ENCODE measurements at regions of chr4 and their contacts with region 1.

Region 1: GRCh38 chr4:4541661-4542570 is at the start of gene STX18:
- DNase-seq: peak; percentile 81 to 95 (median 88)
- ATAC-seq: peak; percentile 95
- H3K4me3 ChIP-seq: peak within 1 kb of the TSS; percentile 91 to 93
- H3K4me3 Mint-ChIP-seq: peak within 1 kb of the TSS; percentile 95
- H3K27ac ChIP-seq: peak within 1 kb of the TSS; percentile 68 to 86
- H3K27ac Mint-ChIP-seq: peak within 1 kb of the TSS; percentile 95
- H3K4me1 ChIP-seq: peaks cover 28% of the 10 kb centered on the region
- H3K4me1 Mint-ChIP-seq: peaks cover 63% of the 10 kb centered on the region
- H3K27me3 ChIP-seq: no peaks in the 10 kb centered on the region
- H3K27me3 Mint-ChIP-seq: no peaks in the 10 kb centered on the region
- CTCF ChIP-seq: no peak
- total RNA-seq, gene STX18: 12.6 to 15.6 TPM

Region 2: DNA sequence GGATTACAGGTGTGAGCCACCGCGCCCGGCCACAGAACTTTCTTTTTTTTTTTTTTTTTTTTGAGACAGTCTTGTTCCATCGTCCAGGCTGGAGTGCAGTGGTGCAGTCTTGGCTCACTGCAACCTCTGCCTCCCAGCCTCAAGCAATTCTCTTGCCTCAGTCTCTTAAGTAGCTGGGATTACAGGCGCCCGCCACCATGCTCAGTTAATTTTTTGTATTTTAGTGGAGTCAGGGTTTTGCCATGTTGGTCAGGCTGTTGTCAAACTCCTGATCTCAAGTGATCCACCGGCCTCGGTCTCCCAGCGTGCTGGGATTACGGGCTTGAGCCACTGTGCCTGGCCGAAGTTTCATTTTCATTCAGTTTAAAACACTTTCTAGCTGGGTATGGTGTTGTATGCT is 1989.1 kb before region 1 on chr4:
- CTCF ChIA-PET with region 1: no interaction called
- POLR2A ChIA-PET with region 1: no interaction called
- intact Hi-C with region 1: no loop called
- DNase-seq: no peak
- ATAC-seq: no peak
- H3K4me3 ChIP-seq: no peak overlapping the region
- H3K4me3 Mint-ChIP-seq: no peak overlapping the region
- H3K27ac ChIP-seq: no peak overlapping the region
- H3K27ac Mint-ChIP-seq: no peak overlapping the region
- H3K4me1 ChIP-seq: no peaks in the 10 kb centered on the region
- H3K4me1 Mint-ChIP-seq: peaks cover 44% of the 10 kb centered on the region
- H3K27me3 ChIP-seq: no peaks in the 10 kb centered on the region
- H3K27me3 Mint-ChIP-seq: no peaks in the 10 kb centered on the region
- CTCF ChIP-seq: no peak

Region 3: GRCh38 chr4:3160438-3160837 is 1381.5 kb before region 1 on chr4:
- CTCF ChIA-PET with region 1: no interaction called
- POLR2A ChIA-PET with region 1: no interaction called
- intact Hi-C with region 1: no loop called
- DNase-seq: no peak
- ATAC-seq: no peak
- H3K4me3 ChIP-seq: no peak overlapping the region
- H3K4me3 Mint-ChIP-seq: no peak overlapping the region
- H3K27ac ChIP-seq: no peak overlapping the region
- H3K27ac Mint-ChIP-seq: no peak overlapping the region
- H3K4me1 ChIP-seq: no peaks in the 10 kb centered on the region
- H3K4me1 Mint-ChIP-seq: peaks cover 16% of the 10 kb centered on the region
- H3K27me3 ChIP-seq: no peaks in the 10 kb centered on the region
- H3K27me3 Mint-ChIP-seq: no peaks in the 10 kb centered on the region
- CTCF ChIP-seq: no peak

Region 4: DNA sequence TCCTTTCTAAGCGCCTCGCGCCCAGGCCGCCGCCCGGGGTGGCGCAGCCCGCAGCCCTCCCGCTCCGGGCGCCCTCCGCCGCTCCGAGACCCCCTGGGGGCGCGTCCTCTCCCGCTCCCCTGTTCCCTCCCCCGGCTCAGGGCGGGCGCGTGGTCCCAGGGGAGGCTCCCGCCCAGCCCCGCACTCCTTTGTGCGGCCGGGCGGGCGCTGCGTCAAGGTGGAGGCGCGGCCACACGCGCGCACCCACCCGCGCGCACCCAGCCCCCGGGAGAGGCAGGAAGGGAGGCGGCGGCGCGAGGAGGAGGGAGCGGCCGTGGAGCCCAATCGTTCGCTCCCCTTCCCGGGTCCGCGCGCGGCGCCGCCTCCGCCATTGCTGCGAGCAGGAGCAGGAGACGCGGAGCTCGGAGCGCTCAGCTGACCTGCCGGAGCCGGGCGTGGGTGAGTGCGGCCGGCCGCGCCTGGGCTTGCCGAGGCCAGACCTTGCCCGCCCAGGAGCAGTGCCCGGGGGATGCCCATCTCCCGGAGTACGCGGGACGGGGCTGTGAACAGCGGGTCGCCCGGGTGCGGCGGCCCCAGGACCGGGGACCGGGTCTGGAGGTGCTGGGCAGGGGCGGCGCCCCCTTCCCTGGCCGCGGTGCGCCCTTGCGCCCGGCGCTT is 155.1 kb before region 1 on chr4 and contains the start of gene NSG1:
- CTCF ChIA-PET with region 1: no interaction called
- POLR2A ChIA-PET with region 1: no interaction called
- intact Hi-C with region 1: loop called (anchors 1 to 5 kb)
- DNase-seq: peak in 8 of 9 experiments; percentile 29 to 72 (median 53)
- ATAC-seq: peak; percentile 66
- H3K4me3 ChIP-seq: peak within 1 kb of the TSS; percentile 58 to 76
- H3K4me3 Mint-ChIP-seq: peak within 1 kb of the TSS; percentile 93
- H3K27ac ChIP-seq: peak within 1 kb of the TSS; percentile 30 to 35
- H3K27ac Mint-ChIP-seq: peak within 1 kb of the TSS; percentile 82
- H3K4me1 ChIP-seq: peaks cover 14% of the 10 kb centered on the region
- H3K4me1 Mint-ChIP-seq: peaks cover 25% of the 10 kb centered on the region
- H3K27me3 ChIP-seq: no peaks in the 10 kb centered on the region
- H3K27me3 Mint-ChIP-seq: peaks cover 7% of the 10 kb centered on the region
- CTCF ChIP-seq: no peak
- total RNA-seq, gene NSG1: 14.2 to 15.8 TPM

Region 5: DNA sequence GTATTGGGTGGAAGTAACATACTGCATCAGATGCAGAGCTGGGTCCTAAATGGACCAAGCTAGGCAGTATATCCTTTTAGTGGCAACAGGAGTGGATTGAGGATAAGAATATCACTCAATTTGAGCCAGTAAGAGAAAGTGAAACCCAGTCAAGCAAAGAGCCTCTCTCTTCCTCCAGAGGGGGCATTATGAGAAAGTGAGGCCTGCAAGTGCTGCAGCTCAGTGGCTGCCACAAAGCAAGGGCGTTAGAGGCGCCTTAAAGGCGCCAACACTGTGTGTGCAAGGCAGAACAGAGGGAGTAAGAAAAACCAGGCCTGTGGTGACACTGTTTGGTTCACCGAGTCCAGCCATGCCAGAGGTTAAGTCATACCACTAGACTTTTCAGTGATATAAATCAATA is 17.6 kb before region 1 on chr4:
- CTCF ChIA-PET with region 1: interaction called, 10 read pairs
- POLR2A ChIA-PET with region 1: interaction called, 9 read pairs
- intact Hi-C with region 1: loop called in 1 of 2 experiments (anchors 1 kb)
- DNase-seq: peak in 7 of 9 experiments; percentile 5 to 79 (median 48)
- ATAC-seq: peak; percentile 98
- H3K4me3 ChIP-seq: no peak overlapping the region
- H3K4me3 Mint-ChIP-seq: peak overlapping the region; percentile 55
- H3K27ac ChIP-seq: peak overlapping the region in 1 of 2 experiments; percentile 46
- H3K27ac Mint-ChIP-seq: peak overlapping the region; percentile 66
- H3K4me1 ChIP-seq: peaks cover 3% of the 10 kb centered on the region
- H3K4me1 Mint-ChIP-seq: peaks cover 51% of the 10 kb centered on the region
- H3K27me3 ChIP-seq: no peaks in the 10 kb centered on the region
- H3K27me3 Mint-ChIP-seq: no peaks in the 10 kb centered on the region
- CTCF ChIP-seq: no peak

Region 6: DNA sequence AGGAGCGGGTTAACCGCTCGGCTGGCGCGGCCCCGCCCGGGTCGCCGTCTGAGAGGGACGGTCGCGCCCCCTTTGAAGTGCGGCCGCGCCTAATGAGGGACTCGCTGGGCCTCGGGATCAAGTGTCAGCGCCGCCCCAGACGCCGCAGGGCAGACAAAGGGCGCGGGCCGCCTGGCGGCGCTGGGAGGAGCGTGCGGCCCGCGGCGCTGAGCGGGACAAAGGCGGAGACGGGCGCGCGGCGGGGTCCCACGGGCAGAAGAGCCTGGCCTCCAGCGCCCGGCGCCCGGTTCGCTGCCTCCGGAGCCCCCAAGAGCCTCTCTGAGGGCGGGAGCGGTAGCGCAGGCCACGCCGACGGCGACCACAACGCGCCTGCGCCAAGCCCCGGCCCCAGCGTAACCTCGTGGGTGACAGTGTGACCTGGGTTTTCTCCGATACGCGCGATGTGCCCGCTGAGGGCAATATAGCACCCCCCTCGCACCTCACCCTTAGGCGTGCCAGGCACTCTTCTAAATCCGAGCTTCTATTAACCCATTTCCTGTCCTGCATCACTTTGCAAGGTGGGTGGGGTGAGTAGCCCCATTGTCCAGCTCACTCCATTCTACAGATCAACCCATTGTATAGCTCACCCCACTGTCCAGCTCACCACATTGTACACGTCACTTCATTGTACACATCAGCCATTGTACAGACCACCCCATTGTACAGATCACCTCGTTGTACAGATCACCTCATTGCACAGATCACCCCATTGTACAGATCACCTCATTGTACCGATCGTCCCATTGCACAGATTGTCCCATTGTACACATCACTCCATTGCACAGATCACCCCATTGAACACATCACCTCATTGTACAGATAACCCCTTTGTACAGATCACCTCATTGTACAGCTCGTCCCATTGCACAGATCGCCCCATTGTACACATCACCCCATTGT is 33.6 kb after region 1 on chr4:
- CTCF ChIA-PET with region 1: interaction called, 6 read pairs
- POLR2A ChIA-PET with region 1: interaction called, 14 read pairs
- intact Hi-C with region 1: loop called (anchors 2 to 5 kb)
- DNase-seq: peak; percentile 18 to 82 (median 63)
- ATAC-seq: peak; percentile 88
- H3K4me3 ChIP-seq: peak overlapping the region; percentile 51 to 63
- H3K4me3 Mint-ChIP-seq: peak overlapping the region; percentile 61
- H3K27ac ChIP-seq: peak overlapping the region in 1 of 2 experiments; percentile 31
- H3K27ac Mint-ChIP-seq: peak overlapping the region; percentile 66
- H3K4me1 ChIP-seq: no peaks in the 10 kb centered on the region
- H3K4me1 Mint-ChIP-seq: peaks cover 14% of the 10 kb centered on the region
- H3K27me3 ChIP-seq: no peaks in the 10 kb centered on the region
- H3K27me3 Mint-ChIP-seq: no peaks in the 10 kb centered on the region
- CTCF ChIP-seq: peak; percentile 30

Region 7: GRCh38 chr4:4985844-4986243 is 443.9 kb after region 1 on chr4:
- CTCF ChIA-PET with region 1: no interaction called
- POLR2A ChIA-PET with region 1: no interaction called
- intact Hi-C with region 1: no loop called
- DNase-seq: no peak
- ATAC-seq: no peak
- H3K4me3 ChIP-seq: no peak overlapping the region
- H3K4me3 Mint-ChIP-seq: no peak overlapping the region
- H3K27ac ChIP-seq: no peak overlapping the region
- H3K27ac Mint-ChIP-seq: no peak overlapping the region
- H3K4me1 ChIP-seq: no peaks in the 10 kb centered on the region
- H3K4me1 Mint-ChIP-seq: no peaks in the 10 kb centered on the region
- H3K27me3 ChIP-seq: no peaks in the 10 kb centered on the region
- H3K27me3 Mint-ChIP-seq: no peaks in the 10 kb centered on the region
- CTCF ChIP-seq: no peak

Measured in CD8-positive, alpha-beta T cell (primary cell).